ENCODE measurements at regions of chr2 and their contacts with region 1.

Region 1: GRCh38 chr2:190063624-190064023 is 1.1 kb upstream of the MSTN start:
- DNase-seq: no peak
- H3K4me3 ChIP-seq: no peak overlapping the region
- H3K27ac ChIP-seq: no peak overlapping the region
- H3K4me1 ChIP-seq: no peaks in the 10 kb centered on the region
- H3K27me3 ChIP-seq: no peaks in the 10 kb centered on the region
- CTCF ChIP-seq: no peak

Region 2: GRCh38 chr2:190029546-190029945 is 34.1 kb before region 1 on chr2:
- CTCF ChIA-PET with region 1: no interaction called
- dilution Hi-C with region 1: no loop called
- in situ Hi-C with region 1: no loop called
- intact Hi-C with region 1: loop called (anchors 1 kb)
- DNase-seq: no peak
- H3K4me3 ChIP-seq: no peak overlapping the region
- H3K27ac ChIP-seq: no peak overlapping the region
- H3K4me1 ChIP-seq: no peaks in the 10 kb centered on the region
- H3K27me3 ChIP-seq: no peaks in the 10 kb centered on the region
- CTCF ChIP-seq: no peak